Activated B cell treated with CpG ODN at 0.5 μM for 24 hours (primary cell): ENCODE measurements at regions of chr14 and their contacts with region 1.

Region 1: DNA sequence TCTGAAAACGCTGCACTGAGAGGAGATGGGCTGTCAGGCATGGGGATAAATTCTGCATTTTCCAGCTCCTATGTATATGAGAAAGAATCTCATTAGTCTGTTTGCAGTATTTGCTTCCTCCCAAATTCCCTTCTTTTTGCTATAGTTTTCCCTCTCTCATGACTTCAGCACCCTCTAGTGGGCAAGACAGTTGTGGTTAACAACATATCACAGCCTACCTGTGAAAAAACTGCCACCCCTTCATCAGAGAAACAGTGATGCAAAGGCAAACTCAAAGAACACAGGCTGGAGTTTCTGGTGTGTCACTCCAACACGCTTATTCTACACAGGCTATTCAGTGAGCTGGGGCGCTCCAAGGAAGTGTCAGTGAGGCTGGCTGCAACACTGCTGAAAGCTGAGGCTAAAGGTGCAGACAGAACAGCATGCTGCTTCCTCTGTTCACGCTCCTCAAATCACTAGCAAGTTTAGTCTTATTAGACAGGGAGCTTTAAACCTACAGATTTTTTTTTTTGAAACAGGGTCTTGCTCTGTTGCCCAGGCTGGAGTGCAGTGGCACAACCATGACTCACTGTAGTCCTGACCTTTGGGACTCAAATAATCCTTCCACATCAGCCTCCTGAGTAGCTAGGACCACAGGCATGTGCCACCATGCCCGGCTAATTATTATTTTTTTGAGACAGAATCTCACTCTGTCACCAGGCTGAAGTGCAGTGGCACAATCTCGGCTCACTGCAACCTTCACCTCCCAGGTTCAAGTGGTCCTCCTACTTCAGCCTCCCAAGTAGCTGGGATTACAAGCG is 19.3 kb downstream of the ZC2HC1C start:
- DNase-seq: no peak
- ATAC-seq: peak; percentile 37
- H3K4me3 Mint-ChIP-seq: no peak overlapping the region
- H3K27ac Mint-ChIP-seq: no peak overlapping the region
- H3K4me1 Mint-ChIP-seq: no peaks in the 10 kb centered on the region
- H3K27me3 Mint-ChIP-seq: no peaks in the 10 kb centered on the region
- CTCF ChIP-seq: peak; percentile 72

Region 2: GRCh38 chr14:74913986-74914573 is 174.7 kb before region 1 on chr14:
- CTCF ChIA-PET with region 1: interaction called, 8 read pairs
- POLR2A ChIA-PET with region 1: no interaction called
- intact Hi-C with region 1: loop called (anchors 1 kb)
- DNase-seq: no peak
- ATAC-seq: peak; percentile 50
- H3K4me3 Mint-ChIP-seq: no peak overlapping the region
- H3K27ac Mint-ChIP-seq: no peak overlapping the region
- H3K4me1 Mint-ChIP-seq: no peaks in the 10 kb centered on the region
- H3K27me3 Mint-ChIP-seq: no peaks in the 10 kb centered on the region
- CTCF ChIP-seq: no peak